ENCODE measurements at regions of chr12 and their contacts with region 1.

Region 1: GRCh38 chr12:114625294-114625851 is 58.6 kb downstream of the TBX3 start:
- DNase-seq: peak; percentile 61
- H3K4me3 Mint-ChIP-seq: no peak overlapping the region
- H3K27ac Mint-ChIP-seq: no peak overlapping the region
- H3K4me1 Mint-ChIP-seq: no peaks in the 10 kb centered on the region
- H3K27me3 Mint-ChIP-seq: no peaks in the 10 kb centered on the region
- CTCF ChIP-seq: peak; percentile 64

Region 2: GRCh38 chr12:114611145-114612018 is 14.0 kb before region 1 on chr12:
- CTCF ChIA-PET with region 1: interaction called, 22 read pairs
- POLR2A ChIA-PET with region 1: no interaction called
- intact Hi-C with region 1: no loop called
- DNase-seq: no peak
- H3K4me3 Mint-ChIP-seq: no peak overlapping the region
- H3K27ac Mint-ChIP-seq: no peak overlapping the region
- H3K4me1 Mint-ChIP-seq: no peaks in the 10 kb centered on the region
- H3K27me3 Mint-ChIP-seq: peaks cover 5% of the 10 kb centered on the region
- CTCF ChIP-seq: no peak

Region 3: GRCh38 chr12:114636723-114637483 is 11.5 kb after region 1 on chr12:
- CTCF ChIA-PET with region 1: interaction called, 37 read pairs
- POLR2A ChIA-PET with region 1: interaction called, 4 read pairs
- intact Hi-C with region 1: no loop called
- DNase-seq: peak; percentile 24
- H3K4me3 Mint-ChIP-seq: no peak overlapping the region
- H3K27ac Mint-ChIP-seq: no peak overlapping the region
- H3K4me1 Mint-ChIP-seq: no peaks in the 10 kb centered on the region
- H3K27me3 Mint-ChIP-seq: peaks cover 27% of the 10 kb centered on the region
- CTCF ChIP-seq: peak; percentile 34

Region 4: DNA sequence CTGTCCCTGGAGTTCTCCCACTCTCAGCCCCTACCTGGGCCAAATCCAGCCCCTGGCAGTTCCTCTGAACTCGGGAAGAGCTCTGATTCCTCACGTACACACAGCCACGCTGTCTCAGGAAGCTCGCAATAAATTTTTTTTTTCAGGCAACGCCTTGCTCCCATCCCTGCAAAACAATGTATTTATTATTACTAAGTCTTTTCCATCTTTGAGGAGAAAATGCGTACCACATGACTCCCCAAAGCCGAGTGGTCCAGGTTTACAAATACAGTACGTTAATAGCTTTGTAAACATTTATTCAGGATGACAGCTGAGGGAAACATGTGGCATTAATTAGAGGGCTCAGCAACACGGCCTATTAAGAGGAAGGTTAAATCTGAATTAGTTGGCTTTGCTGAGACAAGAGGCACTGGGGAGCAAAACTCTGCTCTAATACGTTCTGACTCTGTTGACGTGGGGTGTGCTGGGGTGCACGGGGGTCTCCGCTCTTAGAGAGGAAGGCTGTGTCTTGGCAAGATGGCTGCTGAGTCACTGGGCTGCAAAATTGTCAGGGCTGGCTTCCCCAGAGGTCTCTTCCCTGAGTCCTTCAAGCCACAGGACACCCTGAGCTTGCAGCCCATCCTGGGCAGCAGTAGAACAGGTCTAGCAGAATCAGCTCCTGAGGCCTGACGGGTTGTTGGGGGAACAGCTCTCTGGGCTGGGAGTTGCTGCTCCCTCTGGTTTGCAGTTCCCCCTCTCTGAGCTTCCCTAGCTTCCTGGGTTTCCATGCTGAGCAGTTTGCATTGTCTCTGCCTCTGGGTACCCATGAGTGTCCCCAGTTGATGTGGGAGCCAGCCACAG is 243.8 kb after region 1 on chr12:
- CTCF ChIA-PET with region 1: no interaction called
- POLR2A ChIA-PET with region 1: no interaction called
- intact Hi-C with region 1: no loop called
- DNase-seq: no peak
- H3K4me3 Mint-ChIP-seq: no peak overlapping the region
- H3K27ac Mint-ChIP-seq: no peak overlapping the region
- H3K4me1 Mint-ChIP-seq: no peaks in the 10 kb centered on the region
- H3K27me3 Mint-ChIP-seq: no peaks in the 10 kb centered on the region
- CTCF ChIP-seq: no peak

Region 5: DNA sequence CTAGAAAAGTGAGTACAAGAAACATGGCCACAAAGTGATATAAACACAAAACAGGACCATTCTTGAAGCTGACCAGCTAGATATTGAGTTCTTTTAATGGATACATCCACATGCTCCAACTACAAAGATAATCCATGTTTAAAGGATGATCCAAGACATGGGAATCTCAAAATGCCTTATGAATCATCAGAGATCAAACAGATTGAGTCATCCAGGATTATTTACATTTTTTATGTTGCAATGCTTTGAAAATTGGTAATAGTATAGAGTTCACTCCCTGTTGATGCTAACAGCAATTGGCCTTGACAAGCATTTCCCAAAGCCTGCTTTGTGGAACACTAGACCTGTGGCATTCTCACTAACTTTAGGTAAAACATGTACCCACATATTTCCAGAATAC is 351.6 kb after region 1 on chr12:
- CTCF ChIA-PET with region 1: no interaction called
- POLR2A ChIA-PET with region 1: no interaction called
- intact Hi-C with region 1: no loop called
- DNase-seq: peak; percentile 70
- H3K4me3 Mint-ChIP-seq: no peak overlapping the region
- H3K27ac Mint-ChIP-seq: no peak overlapping the region
- H3K4me1 Mint-ChIP-seq: peaks cover 17% of the 10 kb centered on the region
- H3K27me3 Mint-ChIP-seq: no peaks in the 10 kb centered on the region
- CTCF ChIP-seq: no peak

Measured in MCF 10A (cell line).